ENCODE measurements at regions of chr18 and their contacts with region 1.

Region 1: GRCh38 chr18:43013486-43013885 is 102.0 kb downstream of the RIT2 start:
- DNase-seq: no peak
- ATAC-seq: no peak
- H3K4me3 ChIP-seq: no peak overlapping the region
- H3K27ac ChIP-seq: no peak overlapping the region
- H3K4me1 ChIP-seq: no peaks in the 10 kb centered on the region
- H3K27me3 ChIP-seq: no peaks in the 10 kb centered on the region
- CTCF ChIP-seq: no peak
- POLR2A ChIP-seq: no peak

Region 2: DNA sequence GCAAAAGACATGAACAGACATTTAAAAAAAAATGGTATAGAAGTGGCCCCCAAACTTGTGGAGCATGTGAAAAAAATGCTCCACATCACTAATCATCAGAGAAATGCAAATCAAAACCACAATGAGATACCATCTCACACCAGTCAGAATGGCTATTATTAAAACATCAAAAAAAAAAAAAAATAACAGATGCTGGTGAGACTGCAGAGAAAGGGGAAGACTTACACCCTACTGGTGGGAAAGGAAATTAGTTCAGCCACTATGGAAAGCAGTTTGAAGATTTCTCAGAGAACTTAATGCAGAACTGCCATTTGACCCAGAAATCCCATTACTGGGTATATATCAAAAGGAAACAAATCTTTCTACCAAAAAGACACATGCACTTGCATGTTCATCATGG is 62.8 kb before region 1 on chr18:
- intact Hi-C with region 1: loop called in 1 of 10 experiments (anchors 10 kb)
- DNase-seq: no peak
- ATAC-seq: no peak
- H3K4me3 ChIP-seq: no peak overlapping the region
- H3K27ac ChIP-seq: no peak overlapping the region
- H3K4me1 ChIP-seq: peaks cover 0 to 3% (median 0%) of the 10 kb centered on the region in 12 donors
- H3K27me3 ChIP-seq: no peaks in the 10 kb centered on the region
- CTCF ChIP-seq: no peak
- POLR2A ChIP-seq: no peak

Region 3: GRCh38 chr18:43078478-43079092 is 65.1 kb after region 1 on chr18:
- intact Hi-C with region 1: loop called in 1 of 10 experiments (anchors 10 kb)
- DNase-seq: no peak
- ATAC-seq: no peak
- H3K4me3 ChIP-seq: no peak overlapping the region
- H3K27ac ChIP-seq: no peak overlapping the region
- H3K4me1 ChIP-seq: no peaks in the 10 kb centered on the region
- H3K27me3 ChIP-seq: peaks cover 0 to 5% (median 0%) of the 10 kb centered on the region in 9 donors
- CTCF ChIP-seq: no peak
- POLR2A ChIP-seq: no peak

Measured in heart left ventricle (tissue), 16 donors.